WTC11 (cell line): ENCODE measurements at regions of chr2 and their contacts with region 1.

Region 1: GRCh38 chr2:112645310-112646101 is at the start of gene SLC20A1:
- DNase-seq: peak; percentile 96
- ATAC-seq: peak; percentile 95
- H3K4me3 Mint-ChIP-seq: peak within 1 kb of the TSS; percentile 84
- H3K27ac Mint-ChIP-seq: peak within 1 kb of the TSS; percentile 87
- H3K4me1 Mint-ChIP-seq: peaks cover 30% of the 10 kb centered on the region
- H3K27me3 Mint-ChIP-seq: peaks cover 17% of the 10 kb centered on the region
- CTCF ChIP-seq: peak; percentile 73
- total RNA-seq, gene SLC20A1: 59.9 to 64.4 TPM (median 60.1 TPM) in 3 replicates

Region 2: DNA sequence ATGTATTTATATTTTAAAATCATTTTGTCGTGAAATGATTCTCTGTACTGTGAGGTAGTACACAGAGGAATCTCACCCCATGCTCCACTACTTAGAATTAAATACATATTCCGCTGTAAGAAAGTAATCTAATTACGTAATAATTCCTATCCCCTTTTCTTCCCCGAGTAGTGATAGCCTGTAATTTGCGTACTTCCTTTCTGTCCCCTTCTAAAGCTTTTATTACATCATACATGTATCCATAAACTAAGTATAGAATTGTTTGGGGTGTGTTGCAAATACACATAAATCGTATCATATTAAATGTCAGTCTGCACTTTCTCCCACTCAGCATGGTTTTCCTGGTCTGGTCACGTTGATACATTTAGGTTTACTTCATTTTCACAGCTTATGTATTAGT is 73.5 kb before region 1 on chr2:
- CTCF ChIA-PET with region 1: no interaction called
- POLR2A ChIA-PET with region 1: no interaction called
- DNase-seq: no peak
- ATAC-seq: no peak
- H3K4me3 Mint-ChIP-seq: no peak overlapping the region
- H3K27ac Mint-ChIP-seq: no peak overlapping the region
- H3K4me1 Mint-ChIP-seq: no peaks in the 10 kb centered on the region
- H3K27me3 Mint-ChIP-seq: no peaks in the 10 kb centered on the region
- CTCF ChIP-seq: no peak

Region 3: GRCh38 chr2:112584134-112584890 is 61.2 kb before region 1 on chr2 and contains the start of gene CHCHD5:
- CTCF ChIA-PET with region 1: interaction called, 16 read pairs
- POLR2A ChIA-PET with region 1: no interaction called
- DNase-seq: peak; percentile 90
- ATAC-seq: peak; percentile 88
- H3K4me3 Mint-ChIP-seq: peak within 1 kb of the TSS; percentile 89
- H3K27ac Mint-ChIP-seq: peak within 1 kb of the TSS; percentile 99
- H3K4me1 Mint-ChIP-seq: peaks cover 13% of the 10 kb centered on the region
- H3K27me3 Mint-ChIP-seq: no peaks in the 10 kb centered on the region
- CTCF ChIP-seq: no peak
- total RNA-seq, gene CHCHD5: 33.2 to 36.5 TPM (median 33.7 TPM) in 3 replicates

Region 4: DNA sequence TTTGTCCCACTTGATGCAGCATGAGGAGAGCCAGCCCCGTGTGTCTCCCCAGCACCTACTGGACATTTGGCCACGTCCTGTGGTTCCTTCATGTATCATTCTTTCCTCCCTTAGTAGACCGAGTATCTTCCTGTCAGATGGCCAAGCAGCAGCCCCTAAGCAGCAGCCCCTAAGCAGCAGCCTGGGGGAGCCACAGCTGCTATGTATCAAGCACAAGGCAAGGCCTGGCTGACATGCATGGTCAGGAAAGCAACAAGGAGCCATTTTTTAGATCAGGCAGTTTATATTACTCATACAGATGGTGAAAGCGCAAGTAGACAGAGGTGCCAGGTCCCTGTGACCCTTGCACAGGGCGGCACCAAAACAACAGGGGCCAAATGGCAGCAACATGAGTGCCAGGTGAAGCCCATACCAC is 39.0 kb before region 1 on chr2:
- CTCF ChIA-PET with region 1: interaction called, 11 read pairs
- POLR2A ChIA-PET with region 1: interaction called, 3 read pairs
- DNase-seq: no peak
- ATAC-seq: no peak
- H3K4me3 Mint-ChIP-seq: no peak overlapping the region
- H3K27ac Mint-ChIP-seq: peak overlapping the region; percentile 3; the same call in 1 of the 2 replicates
- H3K4me1 Mint-ChIP-seq: no peaks in the 10 kb centered on the region
- H3K27me3 Mint-ChIP-seq: peaks cover 10% of the 10 kb centered on the region
- CTCF ChIP-seq: no peak

Region 5: GRCh38 chr2:112626604-112627059 is 18.9 kb before region 1 on chr2:
- CTCF ChIA-PET with region 1: interaction called, 77 read pairs
- POLR2A ChIA-PET with region 1: interaction called, 3 read pairs
- DNase-seq: peak; percentile 55
- ATAC-seq: peak; percentile 81
- H3K4me3 Mint-ChIP-seq: no peak overlapping the region
- H3K27ac Mint-ChIP-seq: no peak overlapping the region
- H3K4me1 Mint-ChIP-seq: peaks cover 31% of the 10 kb centered on the region
- H3K27me3 Mint-ChIP-seq: no peaks in the 10 kb centered on the region; the same call in 1 of the 2 replicates
- CTCF ChIP-seq: peak; percentile 45; the same call in 1 of the 2 replicates

Region 6: GRCh38 chr2:112685271-112685884 is 39.9 kb after region 1 on chr2:
- CTCF ChIA-PET with region 1: interaction called, 11 read pairs
- POLR2A ChIA-PET with region 1: no interaction called
- DNase-seq: no peak
- ATAC-seq: no peak
- H3K4me3 Mint-ChIP-seq: no peak overlapping the region
- H3K27ac Mint-ChIP-seq: no peak overlapping the region
- H3K4me1 Mint-ChIP-seq: peaks cover 6% of the 10 kb centered on the region
- H3K27me3 Mint-ChIP-seq: no peaks in the 10 kb centered on the region
- CTCF ChIP-seq: no peak

Region 7: DNA sequence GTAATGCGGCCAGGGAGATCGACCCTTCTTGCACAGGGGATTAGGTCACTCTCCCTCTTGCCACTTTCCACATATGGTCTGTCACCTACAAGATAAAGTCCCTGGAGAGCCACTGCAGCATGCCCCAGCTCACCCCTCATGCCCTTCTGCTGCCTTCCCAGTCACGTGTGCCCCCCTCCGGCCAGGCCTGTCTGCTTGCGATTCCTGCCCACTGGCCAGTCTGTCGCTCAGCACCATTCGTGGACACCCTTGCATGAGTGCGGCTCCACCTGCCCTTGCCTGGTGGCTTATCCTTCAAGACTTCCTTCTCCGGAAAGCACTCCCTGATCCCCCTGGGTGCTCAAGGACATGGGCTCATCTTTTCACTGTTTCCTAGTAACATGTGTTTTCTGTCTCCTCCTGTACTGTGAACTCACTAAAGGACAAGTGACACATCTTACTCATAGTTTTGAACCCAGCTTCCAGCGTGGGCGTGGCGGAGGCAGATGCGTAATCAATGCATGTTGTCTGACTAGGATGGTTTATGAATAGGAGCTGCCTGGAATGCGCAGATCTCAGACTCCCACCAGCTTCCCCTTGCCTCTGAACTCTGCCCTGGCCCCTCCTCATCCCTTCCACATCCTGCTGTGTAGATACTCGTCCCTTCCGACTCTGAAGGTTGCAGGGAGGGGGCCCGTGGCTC is 67.5 kb after region 1 on chr2:
- CTCF ChIA-PET with region 1: no interaction called
- POLR2A ChIA-PET with region 1: no interaction called
- DNase-seq: no peak
- ATAC-seq: no peak
- H3K4me3 Mint-ChIP-seq: no peak overlapping the region
- H3K27ac Mint-ChIP-seq: no peak overlapping the region
- H3K4me1 Mint-ChIP-seq: peaks cover 4% of the 10 kb centered on the region; the same call in 1 of the 2 replicates
- H3K27me3 Mint-ChIP-seq: no peaks in the 10 kb centered on the region
- CTCF ChIP-seq: no peak

Region 8: DNA sequence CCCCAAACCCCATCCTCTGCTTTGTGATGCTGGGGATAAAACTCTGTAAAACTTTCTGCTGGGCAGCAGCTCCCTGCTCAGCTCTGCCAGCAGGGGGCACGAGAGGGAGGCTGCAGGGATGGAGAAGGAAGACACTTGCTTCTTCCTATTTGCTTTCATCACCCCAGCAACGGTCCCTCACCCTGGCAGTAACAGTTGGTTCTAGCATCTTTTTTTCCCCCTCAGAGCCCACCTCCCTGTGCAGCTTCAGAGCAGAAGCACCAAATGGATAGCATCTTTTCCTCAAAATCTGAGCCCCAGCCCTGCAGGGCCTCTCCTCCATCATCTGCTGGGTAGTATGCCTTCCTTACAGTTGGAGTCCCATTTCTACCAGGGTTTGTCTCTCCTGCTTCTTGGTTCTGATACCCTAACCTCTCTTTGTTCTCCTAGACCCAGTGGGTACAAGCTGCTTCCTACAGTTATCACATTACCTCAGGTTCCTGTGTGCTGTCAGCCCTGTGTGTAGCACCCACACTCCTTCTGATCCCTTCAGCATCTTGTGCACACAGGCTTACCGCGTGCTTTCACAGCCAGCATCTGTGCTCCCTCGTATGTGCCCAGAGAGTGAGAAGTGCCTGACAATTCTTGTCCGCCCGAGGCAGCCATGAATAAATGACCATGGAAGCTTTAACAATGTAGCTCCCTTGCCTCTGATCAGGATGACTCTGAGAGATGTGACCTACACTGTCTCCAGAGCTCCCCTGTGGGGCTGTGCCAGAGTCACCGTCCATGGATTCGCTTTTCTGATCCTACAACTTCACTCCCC is 104.5 kb after region 1 on chr2:
- CTCF ChIA-PET with region 1: no interaction called
- POLR2A ChIA-PET with region 1: no interaction called
- DNase-seq: peak; percentile 85
- ATAC-seq: peak; percentile 89
- H3K4me3 Mint-ChIP-seq: no peak overlapping the region
- H3K27ac Mint-ChIP-seq: peak overlapping the region; percentile 19; the same call in 1 of the 2 replicates
- H3K4me1 Mint-ChIP-seq: no peaks in the 10 kb centered on the region
- H3K27me3 Mint-ChIP-seq: no peaks in the 10 kb centered on the region
- CTCF ChIP-seq: peak; percentile 76